OCI-LY7 (cell line): ENCODE measurements at regions of chr2 and their contacts with region 1.

Region 1: GRCh38 chr2:162524192-162524591 is 180.3 kb downstream of the GCA start:
- DNase-seq: no peak
- H3K4me3 ChIP-seq: no peak overlapping the region
- H3K27ac ChIP-seq: no peak overlapping the region
- H3K4me1 ChIP-seq: no peaks in the 10 kb centered on the region
- CTCF ChIP-seq: no peak

Region 2: GRCh38 chr2:162556996-162557395 is 32.8 kb after region 1 on chr2:
- CTCF ChIA-PET with region 1: no interaction called
- POLR2A ChIA-PET with region 1: interaction called, 11 read pairs
- intact Hi-C with region 1: no loop called
- DNase-seq: no peak
- H3K4me3 ChIP-seq: no peak overlapping the region
- H3K27ac ChIP-seq: no peak overlapping the region
- H3K4me1 ChIP-seq: no peaks in the 10 kb centered on the region
- CTCF ChIP-seq: no peak